ENCODE measurements at regions of chr22 and their contacts with region 1.

Region 1: DNA sequence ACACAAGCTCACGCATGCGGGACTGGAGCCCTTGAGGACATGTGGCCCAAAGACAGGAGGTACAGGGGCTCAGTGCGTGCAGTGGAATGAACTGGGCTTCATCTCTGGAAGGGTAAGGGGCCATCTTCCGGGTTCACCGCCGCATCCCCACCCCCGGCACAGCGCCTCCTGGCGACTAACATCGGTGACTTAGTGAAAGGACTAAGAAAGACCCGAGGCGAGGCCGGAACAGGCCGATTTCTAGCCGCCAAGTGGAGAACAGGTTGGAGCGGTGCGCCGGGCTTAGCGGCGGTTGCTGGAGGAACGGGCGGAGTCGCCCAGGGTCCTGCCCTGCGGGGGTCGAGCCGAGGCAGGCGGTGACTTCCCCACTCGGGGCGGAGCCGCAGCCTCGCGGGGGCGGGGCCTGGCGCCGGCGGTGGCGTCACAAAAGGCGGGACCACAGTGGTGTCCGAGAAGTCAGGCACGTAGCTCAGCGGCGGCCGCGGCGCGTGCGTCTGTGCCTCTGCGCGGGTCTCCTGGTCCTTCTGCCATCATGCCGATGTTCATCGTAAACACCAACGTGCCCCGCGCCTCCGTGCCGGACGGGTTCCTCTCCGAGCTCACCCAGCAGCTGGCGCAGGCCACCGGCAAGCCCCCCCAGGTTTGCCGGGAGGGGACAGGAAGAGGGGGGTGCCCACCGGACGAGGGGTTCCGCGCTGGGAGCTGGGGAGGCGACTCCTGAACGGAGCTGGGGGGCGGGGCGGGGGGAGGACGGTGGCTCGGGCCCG is at the start of gene MIF:
- DNase-seq: peak; percentile 49
- H3K4me3 ChIP-seq: peak within 1 kb of the TSS; percentile 94
- CTCF ChIP-seq: peak; percentile 78

Region 2: DNA sequence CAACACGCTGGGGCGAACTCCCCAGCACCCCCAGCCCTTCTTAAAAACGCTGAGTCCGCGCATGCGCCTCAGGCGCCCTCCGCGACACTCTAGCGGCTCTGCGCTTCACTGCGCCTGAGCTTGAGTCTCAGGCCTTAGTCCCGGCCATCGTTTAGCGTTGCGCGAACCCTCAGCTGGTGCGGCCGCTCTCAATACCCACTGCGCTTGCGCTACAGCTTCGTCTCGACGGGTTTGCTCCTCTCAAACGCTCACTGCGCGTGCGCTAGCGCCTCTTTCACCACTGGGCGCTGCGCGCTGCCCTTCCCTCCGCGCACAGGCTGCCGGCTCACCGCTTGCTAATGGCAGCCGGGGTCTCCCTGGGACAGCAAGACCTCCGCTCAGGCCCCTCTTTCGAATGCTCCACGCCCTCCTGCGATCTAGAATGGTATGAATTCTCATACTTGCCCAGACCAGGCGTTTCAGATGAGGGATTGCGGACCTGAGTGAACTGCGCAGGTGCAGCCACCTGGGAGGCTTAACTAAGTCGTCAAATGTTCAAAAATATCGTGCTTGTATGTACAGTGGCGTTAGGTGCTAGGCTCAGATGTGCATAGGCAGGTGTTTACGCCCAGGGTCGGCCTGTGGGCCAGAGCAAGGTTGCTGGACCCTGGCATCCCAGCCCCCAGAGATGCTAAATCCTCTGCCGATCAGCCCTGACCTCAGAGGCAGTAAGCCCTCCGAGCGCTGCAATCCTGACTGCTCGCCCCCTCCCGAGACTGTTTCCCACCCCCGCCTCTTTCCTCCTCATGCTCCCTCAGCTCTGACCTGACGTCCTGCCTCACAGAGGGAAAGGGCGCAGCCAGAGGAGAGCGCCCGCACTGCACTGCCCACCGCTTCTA is 36.3 kb before region 1 on chr22 and contains the start of gene SLC2A11:
- CTCF ChIA-PET with region 1: interaction called, 29 read pairs
- POLR2A ChIA-PET with region 1: interaction called, 8 read pairs
- DNase-seq: peak; percentile 65
- H3K4me3 ChIP-seq: peak within 1 kb of the TSS; percentile 72
- CTCF ChIP-seq: peak; percentile 23

Region 3: DNA sequence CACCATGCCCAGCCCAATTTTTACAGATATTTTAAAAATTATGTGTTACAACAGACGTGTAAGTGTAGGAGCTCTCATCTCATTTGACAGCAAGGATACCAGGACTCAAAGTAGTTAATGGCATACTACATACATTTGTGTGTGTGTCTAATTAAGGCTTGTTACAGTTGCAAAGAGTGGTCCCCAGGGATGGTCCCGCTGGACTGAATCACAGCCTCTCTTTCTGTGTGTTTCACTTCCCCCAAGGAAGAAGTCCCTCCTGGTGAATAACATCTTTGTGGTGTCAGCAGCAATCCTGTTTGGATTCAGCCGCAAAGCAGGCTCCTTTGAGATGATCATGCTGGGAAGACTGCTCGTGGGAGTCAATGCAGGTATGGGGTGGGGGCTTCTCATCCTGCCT is 19.3 kb before region 1 on chr22:
- CTCF ChIA-PET with region 1: interaction called, 14 read pairs
- POLR2A ChIA-PET with region 1: no interaction called
- DNase-seq: no peak
- H3K4me3 ChIP-seq: no peak overlapping the region
- CTCF ChIP-seq: no peak

Region 4: DNA sequence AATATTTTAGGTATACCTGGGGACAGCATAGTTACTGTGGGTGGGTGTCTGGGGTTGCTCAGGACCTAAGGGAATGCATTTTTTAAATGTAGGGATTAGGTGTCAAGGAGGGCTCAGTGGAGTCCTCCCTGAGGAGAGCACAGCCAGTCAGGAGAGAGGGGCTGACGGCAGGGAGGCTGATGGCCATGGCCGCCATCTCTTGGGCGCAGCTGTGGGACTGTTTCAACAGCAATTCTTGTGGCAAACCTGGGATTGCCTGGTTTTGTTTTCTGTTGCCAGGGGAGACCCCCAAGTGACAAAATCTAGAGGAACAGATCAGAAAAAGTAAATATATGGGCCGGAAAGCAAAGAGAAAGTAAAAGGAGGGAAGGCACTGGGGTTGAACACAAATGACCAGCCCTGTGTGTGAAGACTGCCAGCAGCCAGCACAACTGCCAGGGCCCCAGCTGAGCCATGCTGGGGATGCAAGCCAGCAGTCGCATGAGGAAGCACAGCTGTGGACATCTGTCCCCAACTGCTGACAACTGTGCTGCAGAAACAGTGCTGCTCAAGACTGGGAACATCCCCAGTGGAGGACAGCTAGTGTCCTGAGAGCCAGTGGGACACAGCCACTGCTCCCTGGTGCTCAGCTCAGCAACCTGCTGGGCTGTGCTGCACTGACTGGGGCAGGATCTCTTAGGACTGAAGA is 10.6 kb after region 1 on chr22:
- CTCF ChIA-PET with region 1: interaction called, 28 read pairs
- POLR2A ChIA-PET with region 1: interaction called, 4 read pairs
- DNase-seq: no peak
- H3K4me3 ChIP-seq: no peak overlapping the region
- CTCF ChIP-seq: no peak

Region 5: DNA sequence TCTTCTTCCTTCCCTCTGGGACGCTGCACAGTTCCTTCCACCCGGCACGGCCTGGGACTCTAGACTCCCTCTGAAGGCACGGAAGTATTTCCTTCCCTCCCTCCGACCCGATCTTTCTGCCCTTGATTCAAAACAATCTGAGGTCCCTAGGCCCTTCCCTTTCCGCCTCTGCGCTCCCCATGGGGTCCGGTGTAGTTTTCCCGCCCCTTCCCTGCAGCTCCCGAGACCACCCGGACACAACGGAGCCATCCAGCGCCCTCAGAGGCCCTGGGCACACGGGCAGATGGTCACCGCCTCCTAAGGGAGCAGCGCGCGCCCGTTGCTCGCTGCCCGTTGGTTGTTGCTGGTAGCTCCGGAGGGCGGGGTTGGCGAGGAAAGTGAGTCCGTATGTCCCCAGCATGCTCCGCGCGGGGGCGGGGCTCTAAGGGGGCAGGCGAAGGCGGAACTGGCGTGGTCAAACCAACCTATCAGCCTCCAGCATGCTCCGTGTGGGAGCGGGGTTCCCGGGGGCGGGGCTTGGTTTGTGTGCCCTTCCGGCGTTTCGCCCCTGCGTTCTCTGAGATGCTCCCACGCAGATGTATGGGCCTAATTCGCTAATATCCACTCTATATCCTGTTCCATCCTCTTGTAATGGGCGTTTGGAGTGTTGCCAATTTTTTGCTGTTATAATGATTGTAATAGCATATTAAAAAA is 19.7 kb after region 1 on chr22:
- CTCF ChIA-PET with region 1: interaction called, 25 read pairs
- POLR2A ChIA-PET with region 1: interaction called, 17 read pairs
- DNase-seq: peak; percentile 90
- H3K4me3 ChIP-seq: peak overlapping the region; percentile 76
- CTCF ChIP-seq: no peak

Region 6: GRCh38 chr22:23938328-23939016 is 44.3 kb after region 1 on chr22:
- CTCF ChIA-PET with region 1: no interaction called
- POLR2A ChIA-PET with region 1: no interaction called
- DNase-seq: no peak
- H3K4me3 ChIP-seq: no peak overlapping the region
- CTCF ChIP-seq: no peak